Pancreas (tissue), 10 donors: ENCODE measurements at regions of chr1 and their contacts with region 1.

Region 1: DNA sequence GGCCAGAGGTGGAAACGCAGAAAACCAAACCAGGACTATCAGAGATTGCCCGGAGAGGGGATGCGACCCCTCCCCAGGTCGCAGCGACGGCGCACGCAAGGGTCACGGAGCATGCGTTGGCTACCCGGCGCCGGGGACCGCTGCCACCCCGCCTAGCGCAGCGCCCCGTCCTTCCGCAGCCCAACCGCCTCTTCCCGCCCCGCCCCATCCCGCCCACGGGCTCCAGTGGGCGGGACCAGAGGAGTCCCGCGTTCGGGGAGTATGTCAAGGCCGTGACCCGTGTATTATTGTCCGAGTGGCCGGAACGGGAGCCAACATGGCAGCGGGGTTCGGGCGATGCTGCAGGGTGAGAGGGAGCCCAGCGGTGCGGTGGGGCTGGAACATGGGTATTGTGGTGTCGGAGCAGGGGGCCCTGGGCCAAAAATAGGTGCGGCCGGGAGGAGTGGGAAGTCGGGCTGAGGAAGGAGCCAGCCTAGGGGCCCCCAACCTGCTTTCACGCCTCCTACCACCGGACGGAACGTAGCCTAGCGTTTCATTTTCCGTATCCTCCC is at the start of gene ACADM:
- DNase-seq: peak; percentile 84 to 90 (median 84)
- ATAC-seq: peak; percentile 95 to 98 (median 96)
- H3K4me3 ChIP-seq: peak within 1 kb of the TSS; percentile 58 to 68 (median 63)
- H3K27ac ChIP-seq: peak within 1 kb of the TSS; percentile 81 to 94 (median 84)
- H3K4me1 ChIP-seq: peaks cover 0 to 18% (median 11%) of the 10 kb centered on the region in 3 donors
- H3K27me3 ChIP-seq: no peaks in the 10 kb centered on the region
- CTCF ChIP-seq: no peak
- total RNA-seq, gene ACADM: 18.3 to 33.5 (median 26.2) TPM

Region 2: DNA sequence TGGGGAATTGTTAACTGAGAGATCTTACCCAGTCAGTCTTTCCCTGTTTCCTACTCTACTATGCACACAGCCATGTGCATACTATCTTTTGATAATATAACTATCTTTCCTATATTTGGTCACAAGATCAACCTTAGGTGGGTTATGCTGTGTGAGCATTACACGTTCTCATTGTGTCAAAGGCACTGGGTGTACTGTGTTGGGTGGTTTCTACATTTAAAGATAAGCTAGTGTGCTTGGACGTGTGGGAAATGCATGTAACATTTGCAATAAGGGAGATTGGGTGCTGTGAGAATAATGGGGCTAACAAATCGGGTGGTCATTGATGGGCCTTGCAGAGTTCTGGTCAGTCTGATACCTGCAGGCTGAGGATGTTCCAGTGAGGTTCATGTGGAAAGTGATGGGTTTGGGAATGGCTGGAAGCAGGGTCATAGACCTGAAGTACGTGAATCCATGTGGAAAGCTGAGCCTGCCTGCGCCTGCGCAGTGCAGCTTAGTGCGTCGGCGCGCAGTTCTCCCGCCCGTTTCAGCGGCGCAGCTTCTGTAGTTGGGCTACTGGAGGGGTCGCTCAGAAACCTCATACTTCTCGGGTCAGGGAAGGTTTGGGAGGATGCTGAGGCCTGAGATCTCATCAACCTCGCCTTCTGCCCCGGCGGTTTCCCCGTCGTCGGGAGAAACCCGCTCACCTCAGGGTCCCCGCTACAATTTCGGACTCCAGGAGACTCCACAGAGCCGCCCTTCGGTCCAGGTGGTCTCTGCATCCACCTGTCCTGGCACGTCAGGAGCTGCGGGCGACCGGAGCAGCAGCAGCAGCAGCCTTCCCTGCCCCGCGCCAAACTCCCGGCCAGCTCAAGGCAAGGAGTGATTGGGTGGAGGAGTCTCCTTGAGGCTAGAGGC is 72.1 kb after region 1 on chr1 and contains the start of gene MSH4:
- intact Hi-C with region 1: loop called in 1 of 3 experiments (anchors 10 kb)
- DNase-seq: peak in 3 of 6 donors; percentile 28 to 74 (median 58)
- ATAC-seq: peak in 3 of 4 donors; percentile 39 to 67 (median 46)
- H3K4me3 ChIP-seq: no peak within 1 kb of the TSS
- H3K27ac ChIP-seq: no peak within 1 kb of the TSS
- H3K4me1 ChIP-seq: no peaks in the 10 kb centered on the region
- H3K27me3 ChIP-seq: no peaks in the 10 kb centered on the region
- CTCF ChIP-seq: no peak
- total RNA-seq, gene MSH4: 0.09 to 0.19 (median 0.12) TPM